Dendritic cell treated with granulocyte-macrophage colony-stimulating factor and Interleukin-4, amounts not matched to agents 40 ng/mL and 50 ng/mL, for 4 days (primary cell): ENCODE measurements at regions of chr15 and their contacts with region 1.

Region 1: DNA sequence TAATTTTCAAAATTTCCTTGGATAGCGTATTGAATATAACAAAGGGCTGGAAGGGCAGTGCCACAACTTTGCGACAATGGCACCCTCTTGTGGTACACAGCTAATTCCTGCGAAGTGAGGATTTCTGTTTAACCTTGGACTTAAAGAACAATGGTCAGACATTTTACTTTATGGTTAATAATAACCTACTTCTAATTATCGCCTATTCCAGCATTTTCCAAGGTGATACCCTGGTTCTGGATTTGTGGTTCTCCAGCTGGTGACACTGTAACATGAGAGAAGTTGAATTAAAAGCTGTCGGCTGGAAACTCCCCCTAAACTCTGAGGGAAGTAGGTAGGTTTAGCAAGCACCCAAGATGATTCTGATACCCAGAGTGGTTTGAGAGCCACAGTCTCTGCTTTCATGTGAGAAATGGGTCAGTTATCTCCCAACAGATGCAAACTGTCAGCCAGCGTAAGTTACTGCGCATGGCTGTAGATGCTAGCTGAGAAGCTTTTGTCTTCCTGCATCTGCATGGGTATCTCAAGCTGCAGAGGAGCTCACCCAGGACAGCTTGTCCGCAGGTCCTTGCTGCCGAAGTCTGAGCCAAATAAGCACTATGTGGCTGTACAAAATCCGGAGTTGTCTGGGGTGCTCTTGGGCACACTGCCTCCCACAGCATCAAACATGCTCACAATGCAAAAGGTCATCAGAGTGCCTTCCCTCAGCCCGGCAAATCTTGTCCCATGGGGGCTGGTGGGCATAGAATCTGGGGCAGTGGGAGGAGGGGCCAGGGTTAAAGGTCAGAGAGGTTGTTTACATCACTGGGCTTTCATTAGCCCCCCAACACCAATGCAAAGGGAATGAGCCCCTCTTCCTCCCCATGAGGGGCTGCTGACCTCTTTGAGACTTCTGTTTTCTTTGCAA is 6.6 kb upstream of the CHSY1 start:
- H3K4me3 Mint-ChIP-seq: no peak overlapping the region
- H3K27ac Mint-ChIP-seq: no peak overlapping the region
- H3K4me1 Mint-ChIP-seq: no peaks in the 10 kb centered on the region
- H3K27me3 Mint-ChIP-seq: peaks cover 36% of the 10 kb centered on the region

Region 2: DNA sequence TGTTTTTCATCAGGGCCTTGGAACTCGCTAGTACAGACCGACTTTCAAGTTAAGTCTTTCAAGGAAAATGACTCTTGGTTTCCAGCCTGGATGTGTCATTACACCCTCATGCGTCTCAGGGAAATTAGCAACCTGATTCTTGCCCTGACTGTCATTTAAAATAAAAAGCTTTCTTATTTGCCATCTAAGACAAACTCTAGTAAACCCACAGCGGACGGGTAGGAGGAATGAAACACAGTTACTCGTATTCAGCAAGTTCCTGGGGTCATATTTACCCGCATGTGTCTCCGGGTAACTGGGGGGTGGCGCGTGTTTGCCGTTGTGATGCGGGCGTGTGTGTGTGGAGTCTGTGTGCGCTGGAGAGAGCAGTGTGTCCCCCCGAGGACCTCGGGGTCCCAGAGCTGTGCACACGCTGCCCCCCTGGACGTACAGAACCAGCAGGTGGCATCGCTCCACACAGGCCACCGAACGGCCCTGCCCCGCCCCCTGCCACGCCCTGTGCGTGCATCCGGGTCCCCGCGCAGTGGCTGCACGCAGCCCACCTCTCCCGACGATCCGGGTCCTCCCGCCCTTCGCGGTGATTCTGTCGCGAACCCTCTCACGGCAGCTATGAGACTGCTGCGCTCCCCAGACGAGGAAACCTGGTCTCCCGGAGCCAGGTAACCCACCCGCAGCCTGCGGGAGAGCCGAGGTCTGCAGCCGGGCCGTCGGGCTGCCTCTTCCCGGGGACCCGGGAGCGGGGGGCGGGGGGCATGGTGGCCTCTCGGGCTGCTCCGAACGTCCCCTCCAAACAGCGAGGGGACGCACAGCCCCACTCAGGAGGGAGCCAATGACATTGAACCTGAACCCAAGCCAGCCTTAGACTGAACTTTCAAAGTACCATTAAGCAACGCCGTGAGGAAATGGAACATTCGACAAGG is 409.0 kb before region 1 on chr15:
- intact Hi-C with region 1: no loop called
- H3K4me3 Mint-ChIP-seq: peak overlapping the region; percentile 73
- H3K27ac Mint-ChIP-seq: peak overlapping the region; percentile 47
- H3K4me1 Mint-ChIP-seq: peaks cover 6% of the 10 kb centered on the region
- H3K27me3 Mint-ChIP-seq: peaks cover 15% of the 10 kb centered on the region

Region 3: DNA sequence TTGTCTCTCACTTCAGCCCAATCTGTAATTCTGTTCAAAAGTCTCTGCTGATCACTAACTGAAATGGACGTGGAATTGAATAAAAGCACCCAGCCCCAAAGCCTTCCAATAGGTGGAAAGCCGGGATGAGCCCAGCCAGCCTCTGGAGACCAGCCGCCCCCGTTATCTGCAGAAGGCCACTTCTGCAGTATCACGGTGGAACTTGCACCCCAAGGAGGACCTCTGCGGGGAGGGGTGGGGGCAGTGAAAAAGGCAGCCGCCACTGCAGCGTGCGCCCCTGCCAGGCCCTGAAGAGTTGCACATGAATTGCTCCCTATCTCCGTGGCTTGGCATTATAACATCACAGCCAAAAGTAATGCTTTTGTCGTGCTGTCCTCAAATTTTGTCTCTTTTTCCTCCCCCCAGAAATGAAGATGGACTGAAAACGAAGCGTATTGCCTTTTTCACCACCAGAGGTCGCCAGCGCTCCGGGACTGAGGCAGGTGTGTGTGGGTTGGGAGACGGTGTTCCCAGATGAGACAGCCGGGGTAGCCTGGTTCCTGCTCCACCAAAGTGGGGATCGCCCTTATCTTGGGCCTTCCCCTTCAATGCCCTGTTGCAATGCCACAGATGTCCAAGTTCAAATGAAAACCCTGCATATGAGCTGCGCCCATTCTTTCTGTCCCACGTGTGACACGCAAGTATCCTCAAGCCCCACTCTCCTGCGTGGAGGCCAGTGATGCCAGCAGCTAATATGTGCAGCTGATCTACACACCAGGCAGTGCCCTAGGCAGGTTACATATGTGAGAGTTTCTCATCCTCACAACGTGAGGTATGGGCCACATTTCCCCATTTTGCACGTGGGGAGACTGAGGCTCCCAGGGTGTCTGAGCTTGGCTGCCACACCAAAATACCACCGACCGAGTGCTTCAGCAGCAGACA is 243.3 kb before region 1 on chr15:
- intact Hi-C with region 1: loop called (anchors 1 kb)
- H3K4me3 Mint-ChIP-seq: no peak overlapping the region
- H3K27ac Mint-ChIP-seq: no peak overlapping the region
- H3K4me1 Mint-ChIP-seq: peaks cover 18% of the 10 kb centered on the region
- H3K27me3 Mint-ChIP-seq: peaks cover 28% of the 10 kb centered on the region

Region 4: GRCh38 chr15:101088788-101089583 is 169.5 kb before region 1 on chr15:
- intact Hi-C with region 1: loop called (anchors 1 kb)
- H3K4me3 Mint-ChIP-seq: no peak overlapping the region
- H3K27ac Mint-ChIP-seq: no peak overlapping the region
- H3K4me1 Mint-ChIP-seq: peaks cover 35% of the 10 kb centered on the region
- H3K27me3 Mint-ChIP-seq: peaks cover 75% of the 10 kb centered on the region

Region 5: DNA sequence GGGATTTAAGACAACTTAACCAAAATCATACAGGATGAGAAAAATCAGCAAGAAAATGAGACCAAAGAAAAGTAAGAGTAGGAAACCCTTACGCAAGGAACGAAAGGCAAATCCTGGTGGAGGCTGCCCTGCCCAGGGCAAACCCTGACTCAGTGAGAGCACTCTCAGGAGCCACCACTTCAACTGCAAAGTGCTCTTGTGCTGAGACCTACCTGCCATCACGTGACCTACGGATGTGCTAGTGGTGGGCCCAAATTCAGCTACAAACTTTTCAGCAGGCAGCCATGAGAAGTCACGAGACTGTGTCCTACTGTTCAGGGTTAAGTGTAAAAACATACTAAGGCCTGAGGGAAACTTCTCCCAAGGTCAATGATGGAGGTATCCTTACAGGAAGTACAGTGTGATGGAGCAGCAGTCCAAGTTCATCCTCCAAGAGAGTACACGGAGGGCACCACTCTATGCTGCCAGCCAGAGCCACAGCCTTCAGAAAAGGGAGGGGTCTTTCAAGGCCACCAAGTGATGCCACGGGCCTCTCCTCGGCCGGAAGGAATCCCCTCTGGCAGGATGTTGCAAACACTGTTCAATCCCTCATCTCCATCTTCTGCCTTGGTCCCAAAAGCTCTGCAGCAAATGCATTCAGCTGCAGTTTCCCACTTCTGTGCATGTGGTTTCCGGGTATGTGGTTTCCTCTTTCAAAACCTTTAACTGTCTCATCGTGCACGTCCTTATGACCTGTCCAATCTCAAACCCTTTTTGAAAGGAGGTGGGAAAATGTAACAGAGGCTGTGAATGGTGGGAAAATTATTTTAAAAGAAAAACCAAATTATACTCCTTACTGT is 16.1 kb before region 1 on chr15:
- intact Hi-C with region 1: no loop called
- H3K4me3 Mint-ChIP-seq: no peak overlapping the region
- H3K27ac Mint-ChIP-seq: peak overlapping the region; percentile 45
- H3K4me1 Mint-ChIP-seq: peaks cover 74% of the 10 kb centered on the region
- H3K27me3 Mint-ChIP-seq: no peaks in the 10 kb centered on the region